Naive thymus-derived CD4-positive, alpha-beta T cell (primary cell): ENCODE measurements at regions of chr13 and their contacts with region 1.

Region 1: GRCh38 chr13:24381539-24382265 is 72.3 kb downstream of the C1QTNF9 start:
- DNase-seq: no peak
- ATAC-seq: no peak
- H3K4me3 ChIP-seq: no peak overlapping the region
- H3K4me3 Mint-ChIP-seq: no peak overlapping the region
- H3K27ac ChIP-seq: no peak overlapping the region
- H3K27ac Mint-ChIP-seq: peak overlapping the region in 1 of 9 donors; percentile 17
- H3K4me1 ChIP-seq: no peaks in the 10 kb centered on the region
- H3K4me1 Mint-ChIP-seq: peaks cover 6 to 30% (median 17%) of the 10 kb centered on the region in 7 donors
- H3K27me3 ChIP-seq: no peaks in the 10 kb centered on the region
- H3K27me3 Mint-ChIP-seq: peaks cover 0 to 24% (median 0%) of the 10 kb centered on the region in 5 donors

Region 2: DNA sequence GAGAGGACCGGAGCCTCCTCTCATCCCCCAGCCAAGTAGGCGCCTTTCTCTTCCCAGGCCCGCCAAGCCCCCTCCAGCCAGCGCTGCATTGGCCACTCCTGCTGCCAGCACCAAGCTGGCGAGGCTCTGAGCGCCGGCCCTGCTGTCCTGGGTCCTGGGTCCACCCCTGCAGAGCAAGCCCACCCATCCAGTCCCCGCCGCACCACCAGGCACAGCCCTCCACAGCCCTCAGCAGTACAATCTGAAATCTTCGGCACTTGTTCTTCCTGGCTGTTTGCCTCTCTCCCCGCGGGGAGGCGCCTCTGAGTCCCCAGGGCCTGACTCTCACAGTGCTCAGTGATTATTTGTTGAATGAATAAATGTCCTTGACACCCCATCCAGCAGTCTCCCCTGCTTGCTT is 1437.3 kb before region 1 on chr13:
- CTCF ChIA-PET with region 1: no interaction called
- POLR2A ChIA-PET with region 1: no interaction called
- intact Hi-C with region 1: loop called in 1 of 2 experiments (anchors 10 kb)
- DNase-seq: no peak
- ATAC-seq: no peak
- H3K4me3 ChIP-seq: no peak overlapping the region
- H3K4me3 Mint-ChIP-seq: no peak overlapping the region
- H3K27ac ChIP-seq: no peak overlapping the region
- H3K27ac Mint-ChIP-seq: no peak overlapping the region
- H3K4me1 ChIP-seq: no peaks in the 10 kb centered on the region
- H3K4me1 Mint-ChIP-seq: no peaks in the 10 kb centered on the region
- H3K27me3 ChIP-seq: no peaks in the 10 kb centered on the region
- H3K27me3 Mint-ChIP-seq: peaks cover 0 to 22% (median 12%) of the 10 kb centered on the region in 5 donors

Region 3: DNA sequence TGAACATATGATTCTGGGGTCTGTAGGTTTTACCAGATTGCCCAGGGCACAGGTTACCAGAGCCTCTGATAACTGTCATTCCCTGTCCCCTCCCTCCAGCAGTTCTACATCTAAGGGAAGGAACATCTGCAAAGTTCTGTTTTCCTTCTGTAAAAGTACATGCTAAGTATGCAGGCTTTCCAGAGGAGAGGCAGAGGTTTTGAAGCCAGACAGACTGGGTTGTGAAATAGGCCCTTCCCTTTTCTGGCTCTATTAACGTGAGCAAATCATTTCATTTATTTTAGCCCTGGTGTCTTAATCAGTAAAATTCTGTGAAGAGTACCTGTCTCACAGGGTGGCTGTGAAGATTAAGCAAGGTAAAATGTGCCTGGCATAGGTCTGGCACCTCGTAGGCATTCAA is 138.4 kb before region 1 on chr13:
- CTCF ChIA-PET with region 1: no interaction called
- POLR2A ChIA-PET with region 1: no interaction called
- intact Hi-C with region 1: no loop called
- DNase-seq: no peak
- ATAC-seq: no peak
- H3K4me3 ChIP-seq: no peak overlapping the region
- H3K4me3 Mint-ChIP-seq: no peak overlapping the region
- H3K27ac ChIP-seq: no peak overlapping the region
- H3K27ac Mint-ChIP-seq: peak overlapping the region in 1 of 9 donors; percentile 33
- H3K4me1 ChIP-seq: no peaks in the 10 kb centered on the region
- H3K4me1 Mint-ChIP-seq: peaks cover 0 to 15% (median 11%) of the 10 kb centered on the region in 7 donors
- H3K27me3 ChIP-seq: no peaks in the 10 kb centered on the region
- H3K27me3 Mint-ChIP-seq: no peaks in the 10 kb centered on the region

Region 4: DNA sequence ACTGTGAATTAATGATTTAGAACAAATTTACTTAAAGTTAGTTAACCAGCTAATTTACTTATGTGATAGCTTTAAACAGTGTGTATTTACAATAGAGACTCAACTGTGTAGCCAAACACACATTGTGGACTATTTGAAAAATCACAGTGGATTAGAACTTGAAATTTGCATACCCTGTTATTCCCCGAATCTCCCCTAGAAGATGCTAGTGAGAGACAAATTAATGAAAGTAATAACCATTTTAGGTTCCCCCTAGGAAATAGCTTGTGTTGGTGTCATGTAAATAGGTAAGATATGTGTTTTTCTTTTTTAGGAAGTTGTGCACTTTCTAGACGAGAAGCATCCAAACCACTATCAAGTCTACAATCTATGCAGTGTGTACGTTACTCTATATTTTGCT is 26.1 kb after region 1 on chr13:
- CTCF ChIA-PET with region 1: no interaction called
- POLR2A ChIA-PET with region 1: no interaction called
- intact Hi-C with region 1: no loop called
- DNase-seq: no peak
- ATAC-seq: no peak
- H3K4me3 ChIP-seq: no peak overlapping the region
- H3K4me3 Mint-ChIP-seq: no peak overlapping the region
- H3K27ac ChIP-seq: no peak overlapping the region
- H3K27ac Mint-ChIP-seq: peak overlapping the region in 1 of 9 donors; percentile 15
- H3K4me1 ChIP-seq: no peaks in the 10 kb centered on the region
- H3K4me1 Mint-ChIP-seq: peaks cover 0 to 7% (median 0%) of the 10 kb centered on the region in 7 donors
- H3K27me3 ChIP-seq: no peaks in the 10 kb centered on the region
- H3K27me3 Mint-ChIP-seq: peaks cover 5 to 62% (median 16%) of the 10 kb centered on the region in 5 donors